ENCODE measurements at regions of chr1 and their contacts with region 1.

Region 1: GRCh38 chr1:2194898-2195673 is 514 bp upstream of the FAAP20 start:
- DNase-seq: peak; percentile 91 to 96
- H3K4me3 ChIP-seq: peak overlapping the region; percentile 60 to 71
- H3K27ac ChIP-seq: peak overlapping the region; percentile 93 to 94
- H3K4me1 ChIP-seq: peaks cover 8 to 68% (median 62%) of the 10 kb centered on the region in 4 donors
- H3K27me3 ChIP-seq: no peaks in the 10 kb centered on the region
- CTCF ChIP-seq: peak; percentile 95 to 98

Region 2: GRCh38 chr1:2044510-2045319 is 150.4 kb before region 1 on chr1:
- intact Hi-C with region 1: no loop called
- DNase-seq: peak in 1 of 2 donors; percentile 50
- H3K4me3 ChIP-seq: peak overlapping the region in 1 of 2 donors; percentile 18
- H3K27ac ChIP-seq: no peak overlapping the region
- H3K4me1 ChIP-seq: peaks cover 0 to 15% (median 10%) of the 10 kb centered on the region in 4 donors
- H3K27me3 ChIP-seq: peaks cover 0 to 94% of the 10 kb centered on the region in 2 donors
- CTCF ChIP-seq: peak; percentile 72 to 77

Region 3: GRCh38 chr1:2233997-2234761 is 39.1 kb after region 1 on chr1:
- intact Hi-C with region 1: loop called (anchors 5 kb)
- DNase-seq: peak; percentile 97 to 98
- H3K4me3 ChIP-seq: peak overlapping the region; percentile 84 to 88
- H3K27ac ChIP-seq: peak overlapping the region; percentile 90 to 94
- H3K4me1 ChIP-seq: peaks cover 11 to 83% (median 69%) of the 10 kb centered on the region in 4 donors
- H3K27me3 ChIP-seq: no peaks in the 10 kb centered on the region
- CTCF ChIP-seq: no peak

Region 4: DNA sequence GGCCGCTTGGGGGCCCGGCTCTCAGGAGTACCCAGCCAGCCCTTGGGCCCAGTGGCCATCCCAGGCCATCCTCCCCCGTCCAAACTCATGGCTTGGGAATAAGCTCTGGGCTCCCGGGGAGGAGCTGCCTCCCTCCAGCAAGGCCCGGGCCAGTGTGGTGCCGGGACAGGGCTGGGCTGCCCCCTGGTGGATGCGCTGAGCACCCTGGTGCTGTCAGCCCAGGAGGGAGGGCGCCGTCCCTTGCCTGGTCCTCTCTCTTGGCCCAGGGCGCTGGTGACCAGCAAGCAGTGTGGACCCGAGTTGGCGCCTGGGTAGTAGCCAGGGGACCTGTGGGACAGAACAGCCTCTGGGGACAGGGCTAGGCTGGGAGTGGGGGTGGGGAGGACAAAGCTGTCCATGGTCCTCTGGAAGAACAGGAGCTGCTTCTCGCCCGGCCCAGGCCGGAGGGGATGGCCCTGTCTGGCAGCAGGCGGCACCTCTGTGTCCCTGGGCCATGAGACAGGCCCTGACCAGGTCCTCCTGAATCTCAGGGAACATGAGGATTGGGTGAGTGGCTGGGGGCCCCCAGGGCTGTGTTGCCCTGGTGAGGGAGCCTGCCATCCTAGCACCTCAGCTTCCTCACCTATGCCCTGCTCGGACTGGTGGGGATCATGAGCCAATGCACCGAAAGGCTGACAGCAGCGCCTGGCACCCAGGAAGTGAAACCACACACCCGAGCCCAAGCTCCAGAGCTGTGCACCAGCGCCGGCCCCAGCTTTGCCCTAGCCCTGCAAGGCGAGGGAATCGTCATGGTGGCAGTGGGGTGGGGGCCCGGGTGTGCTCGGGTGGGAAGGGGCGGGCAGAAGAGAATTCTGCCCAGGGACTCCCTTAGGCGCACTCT is 186.9 kb after region 1 on chr1:
- intact Hi-C with region 1: loop called (anchors 1 kb)
- DNase-seq: peak; percentile 82 to 91
- H3K4me3 ChIP-seq: no peak overlapping the region
- H3K27ac ChIP-seq: peak overlapping the region; percentile 48
- H3K4me1 ChIP-seq: peaks cover 0 to 16% (median 12%) of the 10 kb centered on the region in 4 donors
- H3K27me3 ChIP-seq: no peaks in the 10 kb centered on the region
- CTCF ChIP-seq: peak; percentile 97 to 99